OCI-LY7 (cell line): ENCODE measurements at regions of chr2 and their contacts with region 1.

Region 1: DNA sequence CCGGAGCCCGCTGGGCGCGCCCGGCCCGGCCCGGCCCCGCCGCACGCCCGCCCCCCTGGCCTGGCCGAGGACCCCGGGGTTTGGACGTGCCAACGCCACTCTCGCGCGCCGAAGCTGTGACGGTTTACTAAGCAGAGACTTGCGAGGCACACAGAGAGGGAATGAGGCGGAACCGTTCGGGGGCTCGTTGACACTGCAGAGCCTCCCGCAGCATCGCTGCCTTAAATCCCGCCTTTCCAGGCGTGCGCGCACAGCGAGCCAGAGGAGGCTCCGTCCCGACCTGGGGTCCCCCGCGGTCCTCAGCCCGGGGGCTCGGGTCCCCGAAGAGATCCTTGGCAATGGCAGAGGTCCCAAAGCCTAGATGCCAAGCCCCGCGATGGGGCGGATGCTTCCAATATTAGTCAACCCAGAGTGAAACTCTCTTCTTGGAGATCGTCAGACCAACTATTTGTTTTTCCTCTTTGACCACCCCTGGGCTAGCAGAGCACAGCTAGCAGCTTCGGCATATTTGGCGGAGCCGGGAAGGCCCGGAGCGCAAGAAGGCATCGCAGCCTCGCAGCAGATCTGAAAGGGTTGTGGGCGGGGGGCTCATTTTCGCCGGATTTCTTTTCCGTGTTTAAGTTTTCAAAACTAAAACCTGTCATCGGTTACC is at the start of gene ZNF385B:
- DNase-seq: peak; percentile 83
- H3K4me3 ChIP-seq: peak within 1 kb of the TSS; percentile 90
- H3K27ac ChIP-seq: peak within 1 kb of the TSS; percentile 83
- H3K4me1 ChIP-seq: peaks cover 63% of the 10 kb centered on the region
- CTCF ChIP-seq: no peak
- total RNA-seq, gene ZNF385B: 113 and 195 TPM in 2 replicates

Region 2: DNA sequence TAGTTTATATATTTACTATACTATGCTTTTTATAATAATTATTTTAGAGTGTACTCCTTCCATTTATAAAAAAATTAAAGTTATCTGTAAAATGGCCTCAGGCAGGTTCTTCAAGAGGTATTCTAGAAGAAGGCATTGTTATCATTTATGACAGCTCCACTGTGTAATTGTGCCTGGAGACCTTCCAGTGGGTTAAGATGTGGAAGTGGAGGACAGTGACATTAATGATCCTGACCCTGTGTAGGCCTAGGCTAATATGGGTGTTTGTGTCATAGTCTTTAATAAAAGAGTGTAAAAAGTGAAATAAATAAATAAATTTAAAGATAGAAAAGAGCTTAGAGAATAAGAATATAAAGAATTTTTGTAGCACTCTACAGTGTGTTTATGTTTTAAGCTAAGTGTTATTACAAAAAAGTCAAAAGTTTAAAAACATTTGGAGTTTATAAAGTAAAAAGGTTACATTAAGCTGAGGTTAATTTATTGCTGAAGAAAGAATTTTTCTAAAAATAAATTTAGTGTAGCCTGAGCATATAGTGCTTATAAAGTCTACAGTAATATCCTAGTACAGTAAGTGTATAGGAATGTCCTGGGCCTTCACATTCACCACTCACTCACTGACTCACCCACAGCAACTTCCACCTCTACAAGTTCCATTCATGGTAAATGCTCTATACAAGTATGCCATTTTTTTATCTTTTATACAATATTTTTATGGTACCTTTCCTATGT is 406.9 kb before region 1 on chr2:
- CTCF ChIA-PET with region 1: no interaction called
- POLR2A ChIA-PET with region 1: no interaction called
- intact Hi-C with region 1: no loop called
- DNase-seq: no peak
- H3K4me3 ChIP-seq: no peak overlapping the region
- H3K27ac ChIP-seq: no peak overlapping the region
- H3K4me1 ChIP-seq: no peaks in the 10 kb centered on the region
- CTCF ChIP-seq: no peak

Region 3: GRCh38 chr2:179595284-179595683 is 266.3 kb before region 1 on chr2:
- CTCF ChIA-PET with region 1: no interaction called
- POLR2A ChIA-PET with region 1: no interaction called
- intact Hi-C with region 1: no loop called
- DNase-seq: no peak
- H3K4me3 ChIP-seq: no peak overlapping the region
- H3K27ac ChIP-seq: no peak overlapping the region
- H3K4me1 ChIP-seq: no peaks in the 10 kb centered on the region
- CTCF ChIP-seq: 0 out of 2 replicates have a peak, but pooled peaks have one; percentile 30

Region 4: DNA sequence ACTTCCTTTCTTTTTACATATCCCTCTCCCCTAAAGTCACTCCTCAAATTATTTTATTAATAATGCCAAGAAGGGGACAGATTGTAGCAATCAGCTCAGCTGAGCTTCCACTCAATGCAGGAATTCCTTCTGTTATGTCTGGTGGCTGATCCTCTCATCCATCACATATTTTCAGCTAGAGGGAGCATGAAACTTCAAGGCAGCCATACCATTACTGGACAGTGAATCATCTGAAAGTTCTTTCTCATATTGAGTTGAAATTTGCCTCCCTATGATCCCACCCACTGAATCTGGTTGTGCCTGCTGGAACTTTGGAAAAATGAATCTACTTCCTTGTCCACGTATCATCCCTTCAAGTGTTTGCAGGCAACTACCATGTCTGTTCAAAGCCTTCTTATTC is 11.4 kb before region 1 on chr2:
- CTCF ChIA-PET with region 1: interaction called, 4 read pairs
- POLR2A ChIA-PET with region 1: interaction called, 36 read pairs
- intact Hi-C with region 1: no loop called
- DNase-seq: no peak
- H3K4me3 ChIP-seq: no peak overlapping the region
- H3K27ac ChIP-seq: no peak overlapping the region
- H3K4me1 ChIP-seq: peaks cover 41% of the 10 kb centered on the region
- CTCF ChIP-seq: no peak

Region 5: GRCh38 chr2:180000434-180000833 is 138.9 kb after region 1 on chr2:
- CTCF ChIA-PET with region 1: no interaction called
- POLR2A ChIA-PET with region 1: no interaction called
- intact Hi-C with region 1: no loop called
- DNase-seq: no peak
- H3K4me3 ChIP-seq: no peak overlapping the region
- H3K27ac ChIP-seq: no peak overlapping the region
- H3K4me1 ChIP-seq: peaks cover 1% of the 10 kb centered on the region
- CTCF ChIP-seq: no peak

Region 6: DNA sequence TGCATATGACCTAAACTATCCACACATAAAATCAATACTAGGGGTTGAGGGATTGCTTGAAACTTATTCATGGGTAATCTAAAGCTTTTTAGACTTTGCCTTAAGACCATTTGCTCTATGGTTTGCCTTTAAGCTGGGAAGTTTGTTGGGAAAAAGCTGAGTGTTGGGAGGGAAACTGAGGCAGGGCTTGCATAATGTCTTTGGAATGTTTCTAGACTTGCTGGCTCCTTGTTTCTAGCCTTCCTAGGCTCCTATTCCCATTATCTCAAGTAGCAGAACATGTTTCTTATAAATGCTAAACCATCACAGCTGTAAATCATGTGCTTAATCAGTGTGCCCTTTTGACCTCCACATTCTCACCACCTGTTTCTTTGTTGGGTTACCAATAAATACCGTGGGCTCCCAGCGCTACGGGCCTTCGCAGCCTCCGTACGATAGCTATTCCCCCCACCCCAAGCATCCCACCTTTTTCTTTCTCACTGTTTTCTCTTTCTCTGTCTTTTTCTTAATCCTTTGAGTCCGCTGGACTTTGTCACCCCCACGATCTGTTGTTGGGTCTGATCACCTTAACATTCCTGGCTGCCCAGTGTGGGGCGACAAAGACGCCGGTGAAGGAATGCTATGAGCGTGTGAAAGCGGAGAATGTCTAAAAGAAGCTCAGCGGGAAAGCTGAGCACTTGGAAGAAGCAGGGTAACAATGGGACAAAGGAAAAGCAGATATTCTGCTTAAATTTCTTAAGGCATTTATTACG is 195.0 kb after region 1 on chr2:
- CTCF ChIA-PET with region 1: no interaction called
- POLR2A ChIA-PET with region 1: no interaction called
- intact Hi-C with region 1: no loop called
- DNase-seq: no peak
- H3K4me3 ChIP-seq: no peak overlapping the region
- H3K27ac ChIP-seq: no peak overlapping the region
- H3K4me1 ChIP-seq: no peaks in the 10 kb centered on the region
- CTCF ChIP-seq: no peak